ENCODE measurements at regions of chr1 and their contacts with region 1.

Region 1: DNA sequence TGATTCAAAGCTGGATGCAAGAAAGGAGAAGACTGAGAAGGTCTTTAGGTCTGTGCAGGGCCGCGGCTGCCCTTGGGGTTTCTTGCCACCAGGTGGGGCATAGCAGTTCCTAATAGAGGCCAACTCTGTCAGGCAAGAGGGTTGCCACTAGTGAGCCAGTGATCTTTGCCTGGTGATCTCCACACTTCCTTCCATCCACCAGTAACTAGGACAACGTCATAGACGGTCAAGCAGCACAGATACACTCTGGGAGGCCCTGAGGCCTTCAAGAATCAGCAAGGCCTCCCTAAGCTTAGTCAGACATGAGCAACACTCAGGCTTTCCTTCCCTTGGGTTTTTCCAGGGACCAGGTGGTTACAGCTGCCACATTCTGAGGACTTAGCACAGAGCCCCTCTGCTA is 32.9 kb upstream of the ATP2B4 start:
- DNase-seq: peak; percentile 54
- H3K4me3 Mint-ChIP-seq: no peak overlapping the region
- H3K27ac Mint-ChIP-seq: no peak overlapping the region
- H3K4me1 Mint-ChIP-seq: peaks cover 10% of the 10 kb centered on the region
- H3K27me3 Mint-ChIP-seq: peaks cover 11% of the 10 kb centered on the region
- CTCF ChIP-seq: peak; percentile 34

Region 2: GRCh38 chr1:203422656-203423055 is 171.1 kb before region 1 on chr1:
- CTCF ChIA-PET with region 1: no interaction called
- POLR2A ChIA-PET with region 1: no interaction called
- intact Hi-C with region 1: no loop called
- DNase-seq: no peak
- H3K4me3 Mint-ChIP-seq: no peak overlapping the region
- H3K27ac Mint-ChIP-seq: no peak overlapping the region
- H3K4me1 Mint-ChIP-seq: no peaks in the 10 kb centered on the region
- H3K27me3 Mint-ChIP-seq: peaks cover 80% of the 10 kb centered on the region
- CTCF ChIP-seq: no peak

Region 3: DNA sequence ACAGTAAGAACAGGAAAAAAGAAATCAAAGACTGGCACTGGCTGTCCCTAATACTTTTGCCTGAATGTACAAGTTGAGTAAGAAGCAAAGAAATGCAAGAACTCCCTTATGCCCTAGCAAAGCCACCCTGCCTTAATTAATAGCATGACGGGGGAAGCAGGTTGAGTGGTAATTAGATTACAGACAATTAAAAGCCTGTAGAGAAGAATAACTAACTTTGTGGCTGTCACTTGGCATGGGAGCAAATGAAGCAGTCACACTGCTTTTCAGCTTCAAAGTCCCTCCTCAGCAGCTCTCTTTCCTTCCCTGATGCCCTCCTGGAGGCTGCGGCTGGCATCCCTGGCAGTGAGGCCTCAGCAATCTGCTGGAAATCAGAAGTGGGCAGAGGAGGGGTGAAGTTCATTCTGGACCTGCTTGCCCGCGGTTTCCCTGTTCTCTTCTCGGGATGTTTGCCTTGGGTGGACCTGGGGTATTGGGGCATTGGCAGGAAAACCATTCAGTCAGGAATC is 96.4 kb before region 1 on chr1:
- CTCF ChIA-PET with region 1: no interaction called
- POLR2A ChIA-PET with region 1: no interaction called
- intact Hi-C with region 1: no loop called
- DNase-seq: no peak
- H3K4me3 Mint-ChIP-seq: no peak overlapping the region
- H3K27ac Mint-ChIP-seq: no peak overlapping the region
- H3K4me1 Mint-ChIP-seq: no peaks in the 10 kb centered on the region
- H3K27me3 Mint-ChIP-seq: peaks cover 14% of the 10 kb centered on the region
- CTCF ChIP-seq: no peak

Region 4: GRCh38 chr1:204232526-204232925 is 638.8 kb after region 1 on chr1:
- CTCF ChIA-PET with region 1: interaction called, 10 read pairs
- POLR2A ChIA-PET with region 1: no interaction called
- intact Hi-C with region 1: no loop called
- DNase-seq: no peak
- H3K4me3 Mint-ChIP-seq: no peak overlapping the region
- H3K27ac Mint-ChIP-seq: no peak overlapping the region
- H3K4me1 Mint-ChIP-seq: peaks cover 3% of the 10 kb centered on the region
- H3K27me3 Mint-ChIP-seq: no peaks in the 10 kb centered on the region
- CTCF ChIP-seq: no peak